ENCODE measurements at regions of chr3 and their contacts with region 1.

Region 1: GRCh38 chr3:122383771-122384697 is at the start of gene FAM162A:
- DNase-seq: peak; percentile 96
- ATAC-seq: peak; percentile 96
- H3K4me3 ChIP-seq: peak within 1 kb of the TSS; percentile 75 to 95 (median 86)
- H3K4me3 Mint-ChIP-seq: peak within 1 kb of the TSS; percentile 93
- H3K27ac ChIP-seq: peak within 1 kb of the TSS; percentile 82 to 83
- H3K27ac Mint-ChIP-seq: peak within 1 kb of the TSS; percentile 94
- H3K4me1 ChIP-seq: peaks cover 11 to 15% of the 10 kb centered on the region in 2 donors
- H3K4me1 Mint-ChIP-seq: peaks cover 37% of the 10 kb centered on the region
- H3K27me3 ChIP-seq: no peaks in the 10 kb centered on the region
- H3K27me3 Mint-ChIP-seq: no peaks in the 10 kb centered on the region
- CTCF ChIP-seq: peak; percentile 68
- total RNA-seq, gene FAM162A: 13.9 and 17.5 TPM in 2 replicates

Region 2: GRCh38 chr3:121660356-121661171 is 723.5 kb before region 1 on chr3 and contains the start of gene HCLS1:
- CTCF ChIA-PET with region 1: no interaction called
- POLR2A ChIA-PET with region 1: no interaction called
- intact Hi-C with region 1: loop called (anchors 1 kb)
- DNase-seq: peak; percentile 91
- ATAC-seq: peak; percentile 84
- H3K4me3 ChIP-seq: peak within 1 kb of the TSS; percentile 59 to 92 (median 68)
- H3K4me3 Mint-ChIP-seq: peak within 1 kb of the TSS; percentile 97
- H3K27ac ChIP-seq: peak within 1 kb of the TSS; percentile 90 to 94
- H3K27ac Mint-ChIP-seq: peak within 1 kb of the TSS; percentile 98
- H3K4me1 ChIP-seq: peaks cover 34 to 39% of the 10 kb centered on the region in 2 donors
- H3K4me1 Mint-ChIP-seq: peaks cover 54% of the 10 kb centered on the region
- H3K27me3 ChIP-seq: no peaks in the 10 kb centered on the region
- H3K27me3 Mint-ChIP-seq: no peaks in the 10 kb centered on the region
- CTCF ChIP-seq: no peak
- total RNA-seq, gene HCLS1: 317 and 331 TPM in 2 replicates

Region 3: GRCh38 chr3:121834696-121835464 is 549.2 kb before region 1 on chr3 and contains the starts of genes EAF2 and IQCB1:
- CTCF ChIA-PET with region 1: no interaction called
- POLR2A ChIA-PET with region 1: no interaction called
- intact Hi-C with region 1: loop called (anchors 1 kb)
- DNase-seq: peak; percentile 99
- ATAC-seq: peak; percentile 97
- H3K4me3 ChIP-seq: peak within 1 kb of the TSS; percentile 83 to 97 (median 94)
- H3K4me3 Mint-ChIP-seq: peak within 1 kb of the TSS; percentile 89
- H3K27ac ChIP-seq: peak within 1 kb of the TSS; percentile 88 to 94
- H3K27ac Mint-ChIP-seq: peak within 1 kb of the TSS; percentile 88
- H3K4me1 ChIP-seq: peaks cover 22 to 46% of the 10 kb centered on the region in 2 donors
- H3K4me1 Mint-ChIP-seq: peaks cover 64% of the 10 kb centered on the region
- H3K27me3 ChIP-seq: no peaks in the 10 kb centered on the region
- H3K27me3 Mint-ChIP-seq: no peaks in the 10 kb centered on the region
- CTCF ChIP-seq: no peak
- total RNA-seq, gene EAF2: 31.1 and 35.0 TPM in 2 replicates
- total RNA-seq, gene IQCB1: 54.6 and 56.5 TPM in 2 replicates

Region 4: DNA sequence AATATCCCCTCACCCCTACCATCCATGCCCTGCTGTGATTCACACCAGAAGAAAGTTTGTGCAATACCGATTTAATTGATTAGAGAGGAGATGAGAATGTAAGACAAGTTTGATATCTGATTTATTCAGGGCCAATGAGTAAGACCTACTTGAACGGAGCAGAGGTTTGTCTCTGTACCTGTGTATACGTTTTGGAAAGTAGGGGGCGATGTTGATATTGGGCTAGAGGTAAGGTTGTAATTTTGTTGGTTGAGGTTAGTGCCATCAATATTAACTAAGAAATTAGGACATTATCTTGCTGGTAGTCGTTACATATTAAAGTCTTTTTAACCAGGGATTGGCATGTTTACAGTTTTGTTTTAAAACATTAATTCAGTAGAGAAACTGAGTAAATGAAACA is 528.5 kb before region 1 on chr3:
- CTCF ChIA-PET with region 1: no interaction called
- POLR2A ChIA-PET with region 1: no interaction called
- intact Hi-C with region 1: no loop called
- DNase-seq: peak; percentile 19
- ATAC-seq: no peak
- H3K4me3 ChIP-seq: no peak overlapping the region
- H3K4me3 Mint-ChIP-seq: no peak overlapping the region
- H3K27ac ChIP-seq: no peak overlapping the region
- H3K27ac Mint-ChIP-seq: peak overlapping the region; percentile 73
- H3K4me1 ChIP-seq: no peaks in the 10 kb centered on the region
- H3K4me1 Mint-ChIP-seq: peaks cover 35% of the 10 kb centered on the region
- H3K27me3 ChIP-seq: no peaks in the 10 kb centered on the region
- H3K27me3 Mint-ChIP-seq: no peaks in the 10 kb centered on the region
- CTCF ChIP-seq: peak; percentile 33

Region 5: DNA sequence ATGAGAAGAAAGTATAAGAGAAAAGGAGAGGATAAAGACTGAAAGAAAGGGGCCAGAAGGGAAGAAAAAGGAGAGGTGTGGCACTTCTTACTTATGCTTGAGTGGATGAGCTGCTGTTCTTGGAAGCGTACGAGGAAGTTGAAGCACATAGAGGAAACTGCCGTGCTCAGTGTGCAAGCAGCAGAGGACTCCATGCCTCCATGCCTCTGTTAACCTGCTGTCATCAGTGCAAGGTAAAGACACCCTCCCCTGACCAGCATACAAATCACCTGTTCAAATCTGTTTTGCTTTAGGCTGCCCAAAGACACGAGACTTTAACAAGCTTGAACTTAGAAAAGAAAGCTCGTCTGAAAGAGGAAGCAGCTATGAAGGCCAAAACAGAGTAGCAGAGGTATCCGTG is 25.4 kb after region 1 on chr3:
- CTCF ChIA-PET with region 1: interaction called, 16 read pairs
- POLR2A ChIA-PET with region 1: interaction called, 6 read pairs
- intact Hi-C with region 1: no loop called
- DNase-seq: peak; percentile 73
- ATAC-seq: peak; percentile 41
- H3K4me3 ChIP-seq: peak overlapping the region in 4 of 5 experiments; percentile 31 to 57 (median 34)
- H3K4me3 Mint-ChIP-seq: peak overlapping the region; percentile 73
- H3K27ac ChIP-seq: peak overlapping the region; percentile 73 to 87
- H3K27ac Mint-ChIP-seq: peak overlapping the region; percentile 92
- H3K4me1 ChIP-seq: peaks cover 17 to 34% of the 10 kb centered on the region in 2 donors
- H3K4me1 Mint-ChIP-seq: peaks cover 40% of the 10 kb centered on the region
- H3K27me3 ChIP-seq: no peaks in the 10 kb centered on the region
- H3K27me3 Mint-ChIP-seq: no peaks in the 10 kb centered on the region
- CTCF ChIP-seq: no peak

Region 6: GRCh38 chr3:122514123-122515019 is 130.3 kb after region 1 on chr3 and contains the start of gene KPNA1:
- CTCF ChIA-PET with region 1: interaction called, 6 read pairs
- POLR2A ChIA-PET with region 1: interaction called, 5 read pairs
- intact Hi-C with region 1: loop called (anchors 1 kb)
- DNase-seq: peak; percentile 94
- ATAC-seq: peak; percentile 79
- H3K4me3 ChIP-seq: peak within 1 kb of the TSS; percentile 64 to 90 (median 85)
- H3K4me3 Mint-ChIP-seq: peak within 1 kb of the TSS; percentile 81
- H3K27ac ChIP-seq: peak within 1 kb of the TSS; percentile 92 to 99
- H3K27ac Mint-ChIP-seq: peak within 1 kb of the TSS; percentile 96
- H3K4me1 ChIP-seq: peaks cover 11 to 15% of the 10 kb centered on the region in 2 donors
- H3K4me1 Mint-ChIP-seq: peaks cover 34% of the 10 kb centered on the region
- H3K27me3 ChIP-seq: no peaks in the 10 kb centered on the region
- H3K27me3 Mint-ChIP-seq: no peaks in the 10 kb centered on the region
- CTCF ChIP-seq: no peak
- total RNA-seq, gene KPNA1: 79.4 and 85.9 TPM in 2 replicates

Region 7: DNA sequence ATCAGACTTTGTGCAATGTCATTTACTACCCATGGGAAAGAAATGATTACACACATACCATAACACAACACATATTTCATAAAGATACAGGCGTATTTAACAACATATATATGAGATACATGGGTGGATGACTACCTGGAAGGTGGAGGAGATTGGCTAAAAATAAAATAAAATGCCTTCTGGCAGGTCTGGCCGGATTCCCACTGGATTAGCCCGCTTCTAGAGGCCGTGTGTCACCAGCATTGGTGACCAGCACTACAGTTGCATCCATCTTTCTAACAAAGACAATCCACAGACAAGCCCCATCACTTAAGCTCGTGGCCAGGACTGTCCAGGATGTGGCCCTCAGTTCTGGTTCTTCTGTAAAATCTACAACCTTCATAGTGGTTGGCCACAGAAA is 796.8 kb after region 1 on chr3:
- CTCF ChIA-PET with region 1: no interaction called
- POLR2A ChIA-PET with region 1: no interaction called
- intact Hi-C with region 1: no loop called
- DNase-seq: no peak
- ATAC-seq: no peak
- H3K4me3 ChIP-seq: no peak overlapping the region
- H3K4me3 Mint-ChIP-seq: no peak overlapping the region
- H3K27ac ChIP-seq: no peak overlapping the region
- H3K27ac Mint-ChIP-seq: no peak overlapping the region
- H3K4me1 ChIP-seq: no peaks in the 10 kb centered on the region
- H3K4me1 Mint-ChIP-seq: no peaks in the 10 kb centered on the region
- H3K27me3 ChIP-seq: no peaks in the 10 kb centered on the region
- H3K27me3 Mint-ChIP-seq: no peaks in the 10 kb centered on the region
- CTCF ChIP-seq: no peak

Measured in B cell (primary cell).